Activated B cell treated with CpG ODN at 0.5 μM for 24 hours (primary cell): ENCODE measurements at regions of chr12 and their contacts with region 1.

Region 1: GRCh38 chr12:56724972-56725722 is at the start of gene NACA:
- DNase-seq: peak; percentile 90
- ATAC-seq: peak; percentile 95
- H3K4me3 Mint-ChIP-seq: peak within 1 kb of the TSS; percentile 99
- H3K27ac Mint-ChIP-seq: peak within 1 kb of the TSS; percentile 98
- H3K4me1 Mint-ChIP-seq: peaks cover 52% of the 10 kb centered on the region
- H3K27me3 Mint-ChIP-seq: no peaks in the 10 kb centered on the region
- CTCF ChIP-seq: no peak
- total RNA-seq, gene NACA: 1,104 and 1,342 TPM in 2 replicates

Region 2: DNA sequence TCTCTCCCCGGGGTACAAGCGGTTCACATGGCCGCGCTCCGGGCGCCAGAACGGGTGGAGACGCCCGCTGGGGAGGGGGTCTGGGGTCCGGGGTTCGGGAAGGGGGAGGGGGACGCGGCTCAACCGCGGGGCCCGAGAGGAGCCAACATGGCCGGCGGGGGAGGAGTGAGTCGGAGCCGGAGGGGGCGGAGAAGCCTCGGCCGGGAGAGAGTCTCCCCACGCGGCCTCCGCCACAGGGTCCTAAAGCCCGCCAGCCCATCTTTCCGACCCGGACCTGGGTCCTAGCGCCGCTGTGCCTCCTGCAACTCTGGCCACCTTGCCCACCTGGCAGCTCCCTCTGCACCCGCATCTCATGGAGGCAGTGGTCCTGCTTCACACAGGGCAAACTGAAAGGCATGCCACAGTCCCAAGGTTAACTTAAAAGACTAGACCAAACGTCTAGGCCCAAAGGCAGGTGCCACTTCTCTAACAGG is 95.0 kb before region 1 on chr12 and contains the start of gene BAZ2A:
- CTCF ChIA-PET with region 1: no interaction called
- POLR2A ChIA-PET with region 1: interaction called, 62 read pairs
- intact Hi-C with region 1: loop called (anchors 1 kb)
- DNase-seq: peak; percentile 74
- ATAC-seq: peak; percentile 62
- H3K4me3 Mint-ChIP-seq: peak within 1 kb of the TSS; percentile 96
- H3K27ac Mint-ChIP-seq: peak within 1 kb of the TSS; percentile 88
- H3K4me1 Mint-ChIP-seq: peaks cover 80% of the 10 kb centered on the region
- H3K27me3 Mint-ChIP-seq: no peaks in the 10 kb centered on the region
- CTCF ChIP-seq: no peak
- total RNA-seq, gene BAZ2A: 153 and 192 TPM in 2 replicates

Region 3: GRCh38 chr12:56645717-56646446 is 79.3 kb before region 1 on chr12 and contains the start of gene ATP5F1B:
- CTCF ChIA-PET with region 1: no interaction called
- POLR2A ChIA-PET with region 1: interaction called, 24 read pairs
- intact Hi-C with region 1: loop called (anchors 1 kb)
- DNase-seq: peak; percentile 68
- ATAC-seq: peak; percentile 97
- H3K4me3 Mint-ChIP-seq: peak within 1 kb of the TSS; percentile 97
- H3K27ac Mint-ChIP-seq: peak within 1 kb of the TSS; percentile 99
- H3K4me1 Mint-ChIP-seq: peaks cover 25% of the 10 kb centered on the region
- H3K27me3 Mint-ChIP-seq: no peaks in the 10 kb centered on the region
- CTCF ChIP-seq: no peak
- total RNA-seq, gene ATP5F1B: 499 and 503 TPM in 2 replicates

Region 4: GRCh38 chr12:56657416-56658379 is 67.4 kb before region 1 on chr12:
- CTCF ChIA-PET with region 1: interaction called, 5 read pairs
- POLR2A ChIA-PET with region 1: interaction called, 21 read pairs
- intact Hi-C with region 1: no loop called
- DNase-seq: no peak
- ATAC-seq: peak; percentile 73
- H3K4me3 Mint-ChIP-seq: peak overlapping the region; percentile 64
- H3K27ac Mint-ChIP-seq: peak overlapping the region; percentile 89
- H3K4me1 Mint-ChIP-seq: peaks cover 35% of the 10 kb centered on the region
- H3K27me3 Mint-ChIP-seq: no peaks in the 10 kb centered on the region
- CTCF ChIP-seq: no peak

Region 5: GRCh38 chr12:57078519-57079404 is 353.6 kb after region 1 on chr12 and contains the start of gene NEMP1:
- CTCF ChIA-PET with region 1: no interaction called
- POLR2A ChIA-PET with region 1: interaction called, 7 read pairs
- intact Hi-C with region 1: loop called (anchors 1 kb)
- DNase-seq: peak; percentile 79
- ATAC-seq: peak; percentile 97
- H3K4me3 Mint-ChIP-seq: peak within 1 kb of the TSS; percentile 96
- H3K27ac Mint-ChIP-seq: peak within 1 kb of the TSS; percentile 93
- H3K4me1 Mint-ChIP-seq: peaks cover 38% of the 10 kb centered on the region
- H3K27me3 Mint-ChIP-seq: no peaks in the 10 kb centered on the region
- CTCF ChIP-seq: no peak
- total RNA-seq, gene NEMP1: 23.0 and 27.6 TPM in 2 replicates

Region 6: GRCh38 chr12:57118711-57119271 is 393.6 kb after region 1 on chr12:
- CTCF ChIA-PET with region 1: no interaction called
- POLR2A ChIA-PET with region 1: no interaction called
- intact Hi-C with region 1: no loop called
- DNase-seq: no peak
- ATAC-seq: no peak
- H3K4me3 Mint-ChIP-seq: no peak overlapping the region
- H3K27ac Mint-ChIP-seq: peak overlapping the region; percentile 57
- H3K4me1 Mint-ChIP-seq: peaks cover 6% of the 10 kb centered on the region
- H3K27me3 Mint-ChIP-seq: no peaks in the 10 kb centered on the region
- CTCF ChIP-seq: no peak